Stomach (tissue), 19 donors: ENCODE measurements at regions of chr1 and their contacts with region 1.

Region 1: GRCh38 chr1:78114034-78114956 is 68.5 kb downstream of the GIPC2 start:
- DNase-seq: peak; percentile 65 to 88
- H3K4me3 ChIP-seq: no peak overlapping the region
- H3K27ac ChIP-seq: no peak overlapping the region
- H3K4me1 ChIP-seq: peaks cover 0 to 7% (median 0%) of the 10 kb centered on the region in 4 donors
- H3K27me3 ChIP-seq: no peaks in the 10 kb centered on the region
- CTCF ChIP-seq: peak in 5 of 7 experiments; percentile 73 to 88 (median 85)
- EP300 ChIP-seq: no peak
- POLR2A ChIP-seq: no peak

Region 2: GRCh38 chr1:77671836-77672235 is 442.5 kb before region 1 on chr1:
- intact Hi-C with region 1: no loop called
- DNase-seq: no peak
- H3K4me3 ChIP-seq: no peak overlapping the region
- H3K27ac ChIP-seq: no peak overlapping the region
- H3K4me1 ChIP-seq: peaks cover 0 to 84% (median 37%) of the 10 kb centered on the region in 4 donors
- H3K27me3 ChIP-seq: no peaks in the 10 kb centered on the region
- CTCF ChIP-seq: no peak
- EP300 ChIP-seq: no peak
- POLR2A ChIP-seq: no peak

Region 3: DNA sequence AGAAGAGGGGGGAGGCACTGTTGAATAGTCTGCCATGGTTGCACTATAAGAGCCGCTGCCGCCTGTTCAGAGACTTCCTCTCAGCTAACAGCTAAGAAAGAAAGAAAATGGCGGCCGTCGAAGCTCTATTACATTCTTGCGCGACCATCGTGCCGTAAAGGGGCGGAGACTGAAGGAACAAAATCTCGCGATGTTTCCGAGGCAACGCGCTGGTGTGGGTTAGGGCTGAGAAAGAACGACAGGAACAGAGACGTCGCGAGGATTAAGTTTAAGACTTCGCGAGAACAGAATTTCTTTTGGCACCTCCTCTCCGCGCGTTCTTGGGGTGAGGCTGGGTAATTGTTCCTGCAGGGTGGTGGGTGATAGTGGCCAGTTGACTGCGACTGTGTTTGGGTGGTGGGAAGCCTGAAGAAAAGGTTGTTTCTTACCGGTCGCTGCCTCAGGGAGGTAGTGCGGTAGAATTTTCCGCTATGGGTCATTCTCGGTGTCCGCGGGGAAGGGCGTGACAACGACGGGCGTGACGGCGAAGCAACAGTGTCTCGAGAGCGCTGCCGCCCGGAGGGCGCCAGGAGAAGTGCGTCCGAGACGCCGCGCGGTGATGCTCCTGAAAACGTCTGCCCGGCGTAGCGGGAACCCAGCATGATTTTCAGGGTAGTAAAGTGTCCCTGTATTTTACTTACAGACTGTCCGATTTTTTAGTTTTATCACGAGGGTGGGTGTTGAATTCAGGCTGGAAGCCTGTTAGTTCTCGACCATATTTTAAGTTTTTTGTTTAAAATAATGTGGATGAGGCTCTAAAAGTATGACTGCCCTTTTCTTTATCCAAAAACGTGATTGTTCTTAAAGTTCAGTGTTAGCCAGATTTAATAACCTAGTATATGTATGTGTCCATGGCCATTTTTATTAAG is 135.1 kb before region 1 on chr1 and contains the start of gene FUBP1:
- intact Hi-C with region 1: loop called (anchors 10 kb)
- DNase-seq: peak; percentile 96 to 99
- H3K4me3 ChIP-seq: peak within 1 kb of the TSS; percentile 67 to 82 (median 74)
- H3K27ac ChIP-seq: peak within 1 kb of the TSS; percentile 98 to 99 (median 99)
- H3K4me1 ChIP-seq: peaks cover 31 to 65% (median 46%) of the 10 kb centered on the region in 4 donors
- H3K27me3 ChIP-seq: no peaks in the 10 kb centered on the region
- CTCF ChIP-seq: peak in 5 of 7 experiments; percentile 50 to 79 (median 77)
- EP300 ChIP-seq: no peak
- POLR2A ChIP-seq: peak in 2 of 4 donors; percentile 8 to 38
- total RNA-seq, gene FUBP1: 39.4 to 394 (median 110) TPM